CD4-positive, alpha-beta memory T cell (primary cell): ENCODE measurements at regions of chr2 and their contacts with region 1.

Region 1: GRCh38 chr2:42249887-42250286 is 80.7 kb downstream of the EML4 start:
- DNase-seq: no peak
- H3K4me3 ChIP-seq: no peak overlapping the region
- H3K4me3 Mint-ChIP-seq: peak overlapping the region in 1 of 8 donors; percentile 36
- H3K27ac ChIP-seq: no peak overlapping the region
- H3K27ac Mint-ChIP-seq: peak overlapping the region in 2 of 7 donors; percentile 30 to 47
- H3K4me1 ChIP-seq: peaks cover 52% of the 10 kb centered on the region
- H3K4me1 Mint-ChIP-seq: peaks cover 58 to 72% (median 67%) of the 10 kb centered on the region in 4 donors
- H3K27me3 ChIP-seq: no peaks in the 10 kb centered on the region
- H3K27me3 Mint-ChIP-seq: no peaks in the 10 kb centered on the region

Region 2: GRCh38 chr2:42296226-42296625 is 46.3 kb after region 1 on chr2:
- CTCF ChIA-PET with region 1: interaction called, 3 read pairs
- POLR2A ChIA-PET with region 1: interaction called, 3 read pairs
- intact Hi-C with region 1: loop called (anchors 5 kb)
- DNase-seq: no peak
- H3K4me3 ChIP-seq: no peak overlapping the region
- H3K4me3 Mint-ChIP-seq: peak overlapping the region; percentile 18 to 84 (median 52)
- H3K27ac ChIP-seq: peak overlapping the region; percentile 3
- H3K27ac Mint-ChIP-seq: peak overlapping the region; percentile 9 to 95 (median 89)
- H3K4me1 ChIP-seq: peaks cover 79% of the 10 kb centered on the region
- H3K4me1 Mint-ChIP-seq: peaks cover 51 to 83% (median 61%) of the 10 kb centered on the region in 4 donors
- H3K27me3 ChIP-seq: no peaks in the 10 kb centered on the region
- H3K27me3 Mint-ChIP-seq: no peaks in the 10 kb centered on the region